Activated CD4-positive, alpha-beta T cell treated with anti-CD3 and anti-CD28 coated beads for 36 hours (primary cell): ENCODE measurements at regions of chr11 and their contacts with region 1.

Region 1: GRCh38 chr11:396948-397548 is 3.0 kb downstream of the PKP3 start:
- DNase-seq: peak; percentile 78
- ATAC-seq: peak; percentile 84
- H3K4me3 Mint-ChIP-seq: no peak overlapping the region
- H3K27ac Mint-ChIP-seq: no peak overlapping the region
- H3K4me1 Mint-ChIP-seq: peaks cover 4% of the 10 kb centered on the region
- H3K27me3 Mint-ChIP-seq: peaks cover 8% of the 10 kb centered on the region

Region 2: GRCh38 chr11:363948-364761 is 32.9 kb before region 1 on chr11:
- CTCF ChIA-PET with region 1: no interaction called
- POLR2A ChIA-PET with region 1: no interaction called
- intact Hi-C with region 1: loop called in 1 of 2 experiments (anchors 2 kb)
- DNase-seq: peak; percentile 78
- ATAC-seq: peak; percentile 77
- H3K4me3 Mint-ChIP-seq: no peak overlapping the region
- H3K27ac Mint-ChIP-seq: no peak overlapping the region
- H3K4me1 Mint-ChIP-seq: peaks cover 15% of the 10 kb centered on the region
- H3K27me3 Mint-ChIP-seq: peaks cover 19% of the 10 kb centered on the region